Activated naive CD4-positive, alpha-beta T cell treated with anti-CD3 and anti-CD28 coated beads, Interleukin-2, amount 10 ng/mL, durations not matched to agents 7 days and 5 days (primary cell): ENCODE measurements at regions of chr3 and their contacts with region 1.

Region 1: GRCh38 chr3:186821429-186822367 is 15.4 kb upstream of the RFC4 start:
- DNase-seq: no peak
- H3K4me3 Mint-ChIP-seq: no peak overlapping the region
- H3K27ac Mint-ChIP-seq: no peak overlapping the region
- H3K4me1 Mint-ChIP-seq: peaks cover 18% of the 10 kb centered on the region
- H3K27me3 Mint-ChIP-seq: peaks cover 24% of the 10 kb centered on the region

Region 2: DNA sequence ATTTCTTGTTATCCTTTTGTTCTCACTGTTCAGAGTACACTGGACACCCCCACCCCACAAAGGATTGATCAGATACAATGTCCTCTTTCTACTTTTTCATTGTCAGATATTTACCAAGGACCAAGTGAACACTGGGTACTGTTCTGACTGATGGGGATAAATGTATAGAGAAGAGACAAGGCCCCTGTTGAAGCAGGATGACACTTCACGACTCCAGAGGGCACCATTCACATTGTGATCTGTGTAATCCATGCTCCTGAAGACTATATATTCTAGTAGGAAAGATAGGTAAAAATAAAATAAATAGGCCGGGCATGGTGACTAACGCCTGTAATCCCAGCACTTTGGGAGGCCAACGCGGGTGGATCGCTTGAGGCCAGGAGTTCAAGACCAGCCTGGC is 270.3 kb before region 1 on chr3:
- CTCF ChIA-PET with region 1: no interaction called
- DNase-seq: no peak
- H3K4me3 Mint-ChIP-seq: no peak overlapping the region
- H3K27ac Mint-ChIP-seq: no peak overlapping the region
- H3K4me1 Mint-ChIP-seq: no peaks in the 10 kb centered on the region
- H3K27me3 Mint-ChIP-seq: no peaks in the 10 kb centered on the region

Region 3: DNA sequence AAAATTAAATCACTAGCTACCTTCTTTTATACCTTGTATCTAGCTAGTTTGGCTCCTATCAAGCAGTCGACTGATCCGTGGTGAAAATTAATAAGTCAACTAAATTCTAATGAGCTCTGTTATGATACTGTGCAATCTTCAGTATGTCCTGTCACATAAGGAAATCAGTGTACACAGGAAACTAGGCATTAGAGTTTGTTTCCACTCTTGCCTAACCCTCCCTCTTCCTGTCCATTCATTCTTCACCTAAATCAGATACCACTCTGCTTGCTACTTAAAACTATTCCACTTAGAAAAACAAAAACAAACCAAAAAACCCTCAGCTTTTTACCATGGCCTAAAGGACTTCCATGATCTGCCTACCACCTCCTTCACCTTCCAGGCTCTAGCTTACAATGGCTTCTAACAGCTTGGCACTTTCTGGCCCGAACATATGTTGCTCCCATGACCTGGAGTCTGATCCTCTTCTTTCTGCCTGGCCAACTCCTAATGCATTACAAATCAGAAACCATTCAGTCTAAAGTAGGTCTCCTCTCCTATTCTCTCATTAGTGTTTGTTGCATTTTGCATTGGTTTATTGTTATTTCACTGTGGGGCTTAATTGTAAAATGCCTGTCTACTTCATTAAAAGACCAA is 23.3 kb before region 1 on chr3:
- CTCF ChIA-PET with region 1: interaction called, 12 read pairs
- DNase-seq: no peak
- H3K4me3 Mint-ChIP-seq: no peak overlapping the region
- H3K27ac Mint-ChIP-seq: peak overlapping the region; percentile 0
- H3K4me1 Mint-ChIP-seq: peaks cover 51% of the 10 kb centered on the region
- H3K27me3 Mint-ChIP-seq: no peaks in the 10 kb centered on the region